ENCODE measurements at regions of chr12 and their contacts with region 1.

Region 1: GRCh38 chr12:40107098-40107802 is 1.4 kb upstream of the SLC2A13 start:
- DNase-seq: peak; percentile 63 to 88 (median 66)
- ATAC-seq: peak; percentile 42
- H3K4me3 ChIP-seq: no peak overlapping the region
- H3K27ac ChIP-seq: no peak overlapping the region
- H3K4me1 ChIP-seq: peaks cover 14 to 26% of the 10 kb centered on the region in 2 experiments; a peak in 4 of 5 replicates
- H3K27me3 ChIP-seq: no peaks in the 10 kb centered on the region
- CTCF ChIP-seq: peak; percentile 87 to 91 (median 90)
- EP300 ChIP-seq: no peak
- POLR2A ChIP-seq: no peak
- RAD21 ChIP-seq: peak; percentile 75 to 88

Region 2: GRCh38 chr12:39619660-39620433 is 487.4 kb before region 1 on chr12 and contains the start of gene ABCD2:
- CTCF ChIA-PET with region 1: no interaction called
- POLR2A ChIA-PET with region 1: no interaction called
- in situ Hi-C with region 1: no loop called
- intact Hi-C with region 1: loop called (anchors 10 kb)
- DNase-seq: peak; percentile 26 to 63 (median 39)
- ATAC-seq: peak; percentile 87
- H3K4me3 ChIP-seq: peak within 1 kb of the TSS; percentile 40
- H3K27ac ChIP-seq: peak within 1 kb of the TSS; percentile 10; the same call in 1 of the 3 replicates
- H3K4me1 ChIP-seq: peaks cover 4 to 5% of the 10 kb centered on the region in 2 experiments; a peak in 3 of 5 replicates
- H3K27me3 ChIP-seq: no peaks in the 10 kb centered on the region
- CTCF ChIP-seq: peak in 2 of 3 experiments; percentile 10 to 28; a peak in 1 of 6 replicates
- EP300 ChIP-seq: no peak
- POLR2A ChIP-seq: no peak
- RAD21 ChIP-seq: 0 out of 4 replicates have a peak, but pooled peaks have one; percentile 12 to 14
- polyA plus RNA-seq, gene ABCD2: 0.03 to 0.08 TPM

Region 3: DNA sequence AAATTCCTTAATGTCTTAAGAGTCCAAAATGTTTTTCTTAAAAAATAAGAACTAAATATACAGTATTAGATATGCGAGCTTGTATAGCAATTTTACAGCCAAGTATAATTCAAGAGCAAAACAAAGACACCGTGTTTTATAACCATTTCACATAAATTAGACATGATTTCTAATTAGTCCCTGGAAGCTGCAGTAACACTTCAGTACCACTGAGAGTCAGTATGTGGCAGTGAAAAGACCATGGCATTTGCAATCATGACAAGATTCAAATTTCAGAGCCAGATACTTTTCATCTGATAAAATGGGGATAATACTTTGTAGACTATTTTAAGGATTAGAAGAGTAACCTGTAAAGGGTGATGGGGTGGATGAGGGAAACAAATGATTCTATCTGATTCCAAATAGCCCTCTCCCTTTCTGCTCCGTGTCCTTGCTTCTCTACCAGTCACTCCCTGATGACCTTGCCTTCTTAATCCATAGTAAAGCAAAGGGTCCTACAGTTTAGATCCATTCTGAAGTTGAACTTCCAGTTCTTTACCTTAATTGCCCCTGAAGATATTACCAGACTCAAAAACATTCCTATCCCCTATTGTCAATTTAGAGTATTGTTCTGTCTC is 342.2 kb before region 1 on chr12:
- CTCF ChIA-PET with region 1: interaction called, 5 read pairs
- POLR2A ChIA-PET with region 1: no interaction called
- in situ Hi-C with region 1: loop called (anchors 25 kb)
- intact Hi-C with region 1: loop called (anchors 1 kb)
- DNase-seq: peak; percentile 18 to 33 (median 27)
- ATAC-seq: peak; percentile 75
- H3K4me3 ChIP-seq: no peak overlapping the region
- H3K27ac ChIP-seq: no peak overlapping the region
- H3K4me1 ChIP-seq: no peaks in the 10 kb centered on the region
- H3K27me3 ChIP-seq: no peaks in the 10 kb centered on the region
- CTCF ChIP-seq: peak; percentile 52 to 82 (median 71); a peak in 5 of 6 replicates
- EP300 ChIP-seq: no peak
- POLR2A ChIP-seq: no peak
- RAD21 ChIP-seq: peak; percentile 73 to 87

Region 4: DNA sequence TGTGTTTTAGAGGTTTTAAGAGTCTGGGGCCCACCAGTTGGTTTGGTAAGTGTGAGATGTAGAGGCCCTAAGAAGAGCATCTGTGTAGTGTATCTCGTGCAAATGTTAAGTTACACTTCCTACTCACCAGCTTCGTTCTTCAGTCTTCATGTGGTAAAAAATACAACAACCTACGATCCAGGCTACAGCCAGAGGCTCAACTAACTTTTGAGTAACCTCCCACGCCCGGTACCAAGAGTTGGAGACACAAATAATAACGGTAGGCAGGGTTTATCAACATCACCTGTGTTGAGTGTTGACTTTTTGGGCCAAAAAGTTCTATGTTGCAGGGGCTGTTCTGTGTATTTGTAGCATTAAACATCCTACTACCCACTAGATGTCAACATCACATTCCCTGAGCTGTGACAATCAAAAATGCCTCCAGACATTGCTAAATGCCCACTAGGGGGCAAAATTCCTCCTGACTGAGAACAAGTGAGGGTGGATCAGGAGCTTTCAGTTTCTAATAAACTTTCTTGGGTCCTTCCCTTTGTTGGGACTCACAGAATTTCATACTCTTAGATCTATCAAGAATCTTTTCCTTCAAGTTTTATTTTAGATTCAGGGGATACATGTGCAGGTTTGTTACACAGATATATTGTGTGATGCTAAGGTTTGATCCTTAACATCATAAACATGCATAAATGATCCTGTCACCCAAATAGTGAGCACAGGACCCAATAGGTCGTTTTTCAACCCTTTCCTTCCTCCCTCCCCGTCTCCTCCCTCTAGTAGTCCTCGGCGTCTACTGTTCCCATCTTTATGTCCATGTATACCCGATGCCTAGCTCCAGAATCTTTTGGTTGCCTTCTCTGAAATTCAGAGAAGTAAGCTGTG is 96.1 kb before region 1 on chr12:
- CTCF ChIA-PET with region 1: interaction called, 30 read pairs
- POLR2A ChIA-PET with region 1: interaction called, 7 read pairs
- in situ Hi-C with region 1: loop called (anchors 10 kb)
- intact Hi-C with region 1: loop called (anchors 1 kb)
- DNase-seq: peak; percentile 45 to 75 (median 49)
- ATAC-seq: peak; percentile 98
- H3K4me3 ChIP-seq: no peak overlapping the region
- H3K27ac ChIP-seq: no peak overlapping the region
- H3K4me1 ChIP-seq: no peaks in the 10 kb centered on the region
- H3K27me3 ChIP-seq: no peaks in the 10 kb centered on the region
- CTCF ChIP-seq: peak; percentile 67 to 94 (median 91)
- EP300 ChIP-seq: no peak
- POLR2A ChIP-seq: no peak
- RAD21 ChIP-seq: peak; percentile 62 to 75

Region 5: GRCh38 chr12:40063414-40063813 is 43.8 kb before region 1 on chr12:
- CTCF ChIA-PET with region 1: no interaction called
- POLR2A ChIA-PET with region 1: no interaction called
- in situ Hi-C with region 1: no loop called
- intact Hi-C with region 1: loop called (anchors 5 kb)
- DNase-seq: no peak
- ATAC-seq: no peak
- H3K4me3 ChIP-seq: no peak overlapping the region
- H3K27ac ChIP-seq: no peak overlapping the region
- H3K4me1 ChIP-seq: no peaks in the 10 kb centered on the region; a peak in 1 of 5 replicates
- H3K27me3 ChIP-seq: no peaks in the 10 kb centered on the region
- CTCF ChIP-seq: no peak
- EP300 ChIP-seq: no peak
- POLR2A ChIP-seq: no peak
- RAD21 ChIP-seq: no peak

Measured in K562 (cell line).